Sigmoid colon (tissue), 7 donors: ENCODE measurements at regions of chr5 and their contacts with region 1.

Region 1: DNA sequence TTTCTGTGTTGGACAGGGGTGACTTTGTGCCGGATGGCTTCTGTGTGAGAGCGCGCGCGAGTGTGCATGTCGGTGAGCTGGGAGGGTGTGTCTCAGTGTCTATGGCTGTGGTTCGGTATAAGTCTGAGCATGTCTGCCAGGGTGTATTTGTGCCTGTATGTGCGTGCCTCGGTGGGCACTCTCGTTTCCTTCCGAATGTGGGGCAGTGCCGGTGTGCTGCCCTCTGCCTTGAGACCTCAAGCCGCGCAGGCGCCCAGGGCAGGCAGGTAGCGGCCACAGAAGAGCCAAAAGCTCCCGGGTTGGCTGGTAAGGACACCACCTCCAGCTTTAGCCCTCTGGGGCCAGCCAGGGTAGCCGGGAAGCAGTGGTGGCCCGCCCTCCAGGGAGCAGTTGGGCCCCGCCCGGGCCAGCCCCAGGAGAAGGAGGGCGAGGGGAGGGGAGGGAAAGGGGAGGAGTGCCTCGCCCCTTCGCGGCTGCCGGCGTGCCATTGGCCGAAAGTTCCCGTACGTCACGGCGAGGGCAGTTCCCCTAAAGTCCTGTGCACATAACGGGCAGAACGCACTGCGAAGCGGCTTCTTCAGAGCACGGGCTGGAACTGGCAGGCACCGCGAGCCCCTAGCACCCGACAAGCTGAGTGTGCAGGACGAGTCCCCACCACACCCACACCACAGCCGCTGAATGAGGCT is at the start of gene ADRB2:
- DNase-seq: peak; percentile 97
- H3K4me3 ChIP-seq: peak within 1 kb of the TSS; percentile 39 to 65 (median 57)
- H3K27ac ChIP-seq: peak within 1 kb of the TSS; percentile 72 to 85 (median 78)
- H3K4me1 ChIP-seq: peaks cover 0 to 30% (median 19%) of the 10 kb centered on the region in 4 donors
- H3K27me3 ChIP-seq: no peaks in the 10 kb centered on the region
- CTCF ChIP-seq: no peak
- EP300 ChIP-seq: no peak
- POLR2A ChIP-seq: peak; percentile 50 to 67
- total RNA-seq, gene ADRB2: 2.0 to 4.3 (median 3.0) TPM

Region 2: DNA sequence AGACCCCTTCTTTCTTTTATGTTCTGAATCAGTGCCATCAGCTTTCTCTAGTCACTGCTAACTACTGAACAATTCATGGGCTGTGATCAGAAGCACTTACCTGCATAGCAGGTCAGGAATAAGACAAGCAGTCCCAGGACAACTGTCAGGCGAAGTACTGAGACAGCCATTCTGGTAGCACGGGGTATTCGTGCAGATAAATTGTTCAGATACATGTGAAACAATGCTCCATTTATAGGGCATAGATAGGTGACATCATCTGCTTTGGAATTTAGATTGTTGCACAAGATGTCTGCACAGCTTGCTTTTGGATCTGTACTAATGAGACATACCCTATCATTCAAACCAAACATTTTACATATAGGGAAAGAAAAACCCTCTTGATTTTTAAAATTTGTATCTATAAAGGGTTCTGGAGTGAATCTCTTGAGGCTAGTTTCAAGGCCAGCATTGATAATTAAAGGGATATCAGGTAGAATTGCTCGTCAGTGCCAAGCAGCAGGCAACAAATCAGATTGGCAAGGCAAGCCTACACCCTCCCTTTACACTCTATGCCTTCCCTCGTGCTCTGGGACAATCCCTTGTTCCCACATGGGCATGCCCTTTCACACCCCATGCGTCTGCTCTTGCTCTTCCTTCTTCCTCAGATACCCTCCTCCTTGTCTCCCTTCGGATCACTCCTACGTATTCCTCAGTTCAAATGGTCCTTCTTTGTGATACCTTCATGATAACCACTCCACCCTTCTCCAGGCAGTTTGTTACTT is 919.7 kb before region 1 on chr5 and contains the start of gene C5orf46:
- intact Hi-C with region 1: no loop called
- DNase-seq: no peak
- H3K4me3 ChIP-seq: no peak within 1 kb of the TSS
- H3K27ac ChIP-seq: peak within 1 kb of the TSS in 1 of 4 donors; percentile 19
- H3K4me1 ChIP-seq: peaks cover 0 to 24% (median 0%) of the 10 kb centered on the region in 4 donors
- H3K27me3 ChIP-seq: no peaks in the 10 kb centered on the region
- CTCF ChIP-seq: no peak
- EP300 ChIP-seq: no peak
- POLR2A ChIP-seq: no peak
- total RNA-seq, gene C5orf46: not detected

Region 3: DNA sequence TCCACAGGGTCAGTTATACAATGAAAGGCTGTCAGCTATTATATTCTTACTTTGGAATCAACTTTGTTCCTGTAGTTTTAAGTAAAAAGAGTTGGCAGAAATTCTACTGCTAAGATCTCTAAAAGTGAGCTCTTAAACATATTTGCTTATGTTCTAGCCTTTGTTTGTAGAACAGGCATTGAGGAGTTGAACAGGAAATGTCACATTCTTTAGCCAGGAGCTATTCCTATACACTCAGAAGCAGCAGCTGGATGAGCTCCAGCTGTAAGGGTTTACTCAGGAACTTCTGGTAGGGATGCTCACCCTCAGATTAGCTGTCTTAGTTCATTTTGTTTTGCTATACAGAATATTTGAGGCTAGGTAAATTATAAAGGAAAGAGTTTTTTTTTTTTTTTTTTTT is 680.3 kb before region 1 on chr5:
- intact Hi-C with region 1: no loop called
- DNase-seq: no peak
- H3K4me3 ChIP-seq: no peak overlapping the region
- H3K27ac ChIP-seq: no peak overlapping the region
- H3K4me1 ChIP-seq: no peaks in the 10 kb centered on the region
- H3K27me3 ChIP-seq: no peaks in the 10 kb centered on the region
- CTCF ChIP-seq: no peak
- EP300 ChIP-seq: no peak
- POLR2A ChIP-seq: no peak

Region 4: DNA sequence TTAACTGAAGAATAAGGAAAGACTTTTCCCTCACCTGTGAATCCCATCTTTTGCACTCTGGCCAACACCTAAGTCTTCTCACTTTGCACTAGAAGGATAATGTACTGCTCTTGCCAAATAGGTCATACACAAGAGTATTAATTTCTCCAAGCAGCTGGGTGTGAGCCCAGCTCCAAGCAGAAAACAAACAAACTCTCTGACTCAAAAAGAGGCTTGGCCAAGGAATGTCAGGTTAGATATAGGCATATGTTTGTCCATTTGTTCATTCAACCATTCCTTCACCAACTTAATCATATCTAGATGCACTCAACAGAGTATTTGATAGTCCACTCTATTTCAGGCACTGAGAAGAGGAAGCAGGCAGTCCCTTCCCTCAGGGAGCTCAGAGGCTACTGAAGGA is 256.2 kb before region 1 on chr5:
- intact Hi-C with region 1: no loop called
- DNase-seq: no peak
- H3K4me3 ChIP-seq: no peak overlapping the region
- H3K27ac ChIP-seq: no peak overlapping the region
- H3K4me1 ChIP-seq: peaks cover 0 to 6% (median 0%) of the 10 kb centered on the region in 4 donors
- H3K27me3 ChIP-seq: no peaks in the 10 kb centered on the region
- CTCF ChIP-seq: no peak
- EP300 ChIP-seq: no peak
- POLR2A ChIP-seq: no peak

Region 5: GRCh38 chr5:148740966-148741742 is 85.0 kb before region 1 on chr5:
- intact Hi-C with region 1: loop called (anchors 5 kb)
- DNase-seq: peak; percentile 63
- H3K4me3 ChIP-seq: no peak overlapping the region
- H3K27ac ChIP-seq: peak overlapping the region in 1 of 4 donors; percentile 23
- H3K4me1 ChIP-seq: peaks cover 0 to 25% (median 17%) of the 10 kb centered on the region in 4 donors
- H3K27me3 ChIP-seq: no peaks in the 10 kb centered on the region
- CTCF ChIP-seq: peak; percentile 67 to 78 (median 76)
- EP300 ChIP-seq: no peak
- POLR2A ChIP-seq: no peak

Region 6: DNA sequence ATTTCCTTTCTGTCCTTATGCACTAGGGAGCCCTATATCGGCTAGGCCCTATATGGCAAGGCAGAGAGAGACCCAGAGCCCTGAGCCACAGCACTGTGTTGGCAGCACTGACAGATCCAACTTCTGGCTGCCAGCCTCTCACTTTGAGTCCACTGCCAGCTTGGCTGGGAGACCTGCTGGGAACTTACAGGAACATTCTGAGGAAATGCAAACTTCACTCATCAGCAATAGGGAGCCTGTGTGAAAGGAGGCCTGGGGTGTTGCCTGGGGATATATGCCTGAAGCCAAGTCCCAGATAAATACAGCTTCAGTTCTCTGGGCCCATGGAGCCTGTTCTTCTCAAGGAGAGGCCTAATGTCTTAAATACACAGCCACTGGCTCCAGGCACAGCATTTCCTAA is 78.2 kb after region 1 on chr5:
- intact Hi-C with region 1: loop called (anchors 5 kb)
- DNase-seq: peak; percentile 91
- H3K4me3 ChIP-seq: no peak overlapping the region
- H3K27ac ChIP-seq: peak overlapping the region; percentile 60 to 78 (median 70)
- H3K4me1 ChIP-seq: peaks cover 0 to 24% (median 11%) of the 10 kb centered on the region in 4 donors
- H3K27me3 ChIP-seq: no peaks in the 10 kb centered on the region
- CTCF ChIP-seq: no peak
- EP300 ChIP-seq: peak in 1 of 4 donors; percentile 58
- POLR2A ChIP-seq: no peak

Region 7: GRCh38 chr5:148957591-148958202 is 131.5 kb after region 1 on chr5:
- intact Hi-C with region 1: loop called (anchors 10 kb)
- DNase-seq: no peak
- H3K4me3 ChIP-seq: no peak overlapping the region
- H3K27ac ChIP-seq: no peak overlapping the region
- H3K4me1 ChIP-seq: no peaks in the 10 kb centered on the region
- H3K27me3 ChIP-seq: no peaks in the 10 kb centered on the region
- CTCF ChIP-seq: peak; percentile 6 to 71 (median 60)
- EP300 ChIP-seq: no peak
- POLR2A ChIP-seq: no peak

Region 8: GRCh38 chr5:148998174-148998797 is 172.1 kb after region 1 on chr5:
- intact Hi-C with region 1: loop called (anchors 5 kb)
- DNase-seq: no peak
- H3K4me3 ChIP-seq: no peak overlapping the region
- H3K27ac ChIP-seq: no peak overlapping the region
- H3K4me1 ChIP-seq: peaks cover 0 to 25% (median 18%) of the 10 kb centered on the region in 4 donors
- H3K27me3 ChIP-seq: no peaks in the 10 kb centered on the region
- CTCF ChIP-seq: peak in 3 of 4 experiments; percentile 42 to 73 (median 64)
- EP300 ChIP-seq: no peak
- POLR2A ChIP-seq: no peak

Region 9: GRCh38 chr5:149079883-149080282 is 253.7 kb after region 1 on chr5:
- intact Hi-C with region 1: no loop called
- DNase-seq: no peak
- H3K4me3 ChIP-seq: no peak overlapping the region
- H3K27ac ChIP-seq: no peak overlapping the region
- H3K4me1 ChIP-seq: no peaks in the 10 kb centered on the region
- H3K27me3 ChIP-seq: no peaks in the 10 kb centered on the region
- CTCF ChIP-seq: no peak
- EP300 ChIP-seq: no peak
- POLR2A ChIP-seq: no peak